ENCODE measurements at regions of chr2 and their contacts with region 1.

Region 1: DNA sequence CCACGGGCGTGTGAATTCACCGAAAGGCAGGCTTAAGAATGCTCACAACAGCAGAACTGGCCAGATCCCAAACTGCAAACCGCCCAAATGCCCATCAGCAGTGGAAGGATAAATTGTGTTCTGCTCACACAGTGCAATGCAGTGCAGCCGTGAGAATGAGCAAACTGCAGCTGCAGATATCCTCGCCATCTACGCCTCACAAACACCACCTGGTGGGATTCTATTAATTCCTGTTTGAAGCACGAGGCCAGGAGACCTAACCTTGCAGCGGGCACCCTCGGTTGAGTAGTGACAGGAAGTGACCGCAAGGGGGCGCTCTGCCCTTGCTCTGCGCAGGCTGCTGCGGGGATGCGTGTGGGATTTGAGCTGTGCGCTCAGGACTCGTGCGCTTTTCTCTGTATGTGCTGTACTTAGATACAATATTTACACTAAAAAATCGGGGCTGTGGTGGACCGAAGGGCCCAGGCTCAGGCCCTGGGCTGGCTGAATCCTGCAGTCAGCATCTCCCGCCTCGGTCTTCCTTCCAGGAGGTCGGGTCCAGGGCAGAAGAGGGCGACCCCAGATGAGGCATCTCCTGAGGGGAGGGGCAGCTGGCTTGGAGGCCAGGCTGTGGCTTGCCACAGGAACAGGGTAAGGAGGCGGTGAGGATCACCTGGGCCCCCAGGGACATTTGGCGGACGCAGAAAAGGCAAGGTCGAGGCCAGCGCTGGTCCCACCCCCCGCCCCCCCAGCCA is 19.8 kb upstream of the PDIA6 start:
- DNase-seq: peak; percentile 64
- H3K4me3 ChIP-seq: no peak overlapping the region
- H3K27ac ChIP-seq: no peak overlapping the region
- H3K4me1 ChIP-seq: no peaks in the 10 kb centered on the region
- H3K27me3 ChIP-seq: peaks cover 4% of the 10 kb centered on the region
- CTCF ChIP-seq: peak; percentile 95 to 99

Region 2: DNA sequence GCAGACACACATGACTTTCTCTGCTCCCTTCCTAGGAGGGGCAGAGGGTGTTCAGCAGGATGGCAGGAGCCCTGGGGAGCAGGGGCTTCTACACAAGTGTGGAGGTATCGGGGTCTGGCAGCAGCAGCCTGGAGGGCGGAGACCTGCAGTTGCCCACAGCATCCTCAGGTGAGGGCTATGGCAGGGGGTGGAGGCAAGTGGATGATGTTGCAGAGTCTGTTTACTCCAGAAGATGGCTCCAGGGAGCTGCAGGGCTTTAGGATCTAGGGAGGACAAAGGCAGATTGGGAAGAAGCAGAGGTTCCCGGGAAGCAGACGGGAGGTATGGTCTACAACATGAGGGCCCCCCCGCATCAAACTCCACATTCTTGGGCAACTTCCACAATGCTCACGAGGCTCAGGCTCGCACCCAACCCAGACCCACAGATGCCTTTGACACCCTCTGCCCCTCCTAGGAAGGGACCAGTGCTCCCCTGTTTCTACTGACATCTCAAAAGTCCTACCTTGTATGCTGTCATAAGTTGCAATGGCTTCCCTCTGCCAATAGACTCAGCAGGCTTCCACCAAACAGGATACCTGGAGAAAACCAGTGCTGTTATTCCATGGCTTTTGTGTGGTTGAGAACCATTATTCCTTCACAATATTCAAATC is 123.0 kb before region 1 on chr2:
- CTCF ChIA-PET with region 1: interaction called, 3 read pairs
- dilution Hi-C with region 1: no loop called
- in situ Hi-C with region 1: no loop called
- intact Hi-C with region 1: loop called (anchors 1 kb)
- DNase-seq: peak; percentile 44
- H3K4me3 ChIP-seq: no peak overlapping the region
- H3K27ac ChIP-seq: no peak overlapping the region
- H3K4me1 ChIP-seq: peaks cover 6% of the 10 kb centered on the region
- H3K27me3 ChIP-seq: no peaks in the 10 kb centered on the region
- CTCF ChIP-seq: peak; percentile 64 to 83

Region 3: GRCh38 chr2:10911261-10912075 is 79.1 kb after region 1 on chr2 and contains the start of gene KCNF1:
- CTCF ChIA-PET with region 1: no interaction called
- dilution Hi-C with region 1: no loop called
- in situ Hi-C with region 1: no loop called
- intact Hi-C with region 1: loop called (anchors 5 kb)
- DNase-seq: peak; percentile 58
- H3K4me3 ChIP-seq: peak within 1 kb of the TSS; percentile 1 to 43 (median 32)
- H3K27ac ChIP-seq: no peak within 1 kb of the TSS
- H3K4me1 ChIP-seq: no peaks in the 10 kb centered on the region
- H3K27me3 ChIP-seq: peaks cover 9% of the 10 kb centered on the region
- CTCF ChIP-seq: peak; percentile 23 to 49
- total RNA-seq, gene KCNF1: 0.54 to 2.5 TPM

Region 4: GRCh38 chr2:11124503-11125068 is 292.2 kb after region 1 on chr2:
- CTCF ChIA-PET with region 1: interaction called, 8 read pairs
- dilution Hi-C with region 1: no loop called
- in situ Hi-C with region 1: loop called (anchors 5 kb)
- intact Hi-C with region 1: loop called (anchors 1 kb)
- DNase-seq: peak; percentile 45
- H3K4me3 ChIP-seq: no peak overlapping the region
- H3K27ac ChIP-seq: no peak overlapping the region
- H3K4me1 ChIP-seq: peaks cover 21% of the 10 kb centered on the region
- H3K27me3 ChIP-seq: no peaks in the 10 kb centered on the region
- CTCF ChIP-seq: peak; percentile 91 to 97

Region 5: DNA sequence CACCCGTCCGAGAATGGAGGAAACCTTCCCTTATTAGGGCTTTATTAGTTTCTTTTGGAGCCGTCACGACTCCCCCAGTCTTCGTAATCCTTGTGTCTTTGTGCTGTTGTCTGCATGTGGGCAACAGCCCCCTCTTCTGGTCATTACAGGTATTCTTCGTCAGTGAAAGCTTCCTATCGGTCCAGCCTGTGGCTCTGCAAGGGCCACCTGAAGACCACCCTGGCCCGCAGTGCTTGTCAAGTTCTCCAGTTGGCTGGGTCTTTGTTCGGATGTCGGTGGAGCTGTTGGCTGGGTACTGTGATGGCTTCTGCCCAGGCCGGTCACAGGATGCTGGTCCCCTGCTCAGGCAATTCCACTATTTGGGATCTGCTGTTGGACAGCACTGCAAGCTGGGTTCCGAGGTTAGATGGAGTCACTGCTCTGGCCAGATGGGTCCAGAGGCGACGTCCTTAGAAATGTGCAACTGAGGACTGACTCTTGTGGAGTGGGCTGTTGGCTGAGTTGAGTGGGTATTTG is 614.4 kb after region 1 on chr2:
- CTCF ChIA-PET with region 1: no interaction called
- dilution Hi-C with region 1: no loop called
- in situ Hi-C with region 1: loop called in 1 of 2 experiments (anchors 25 kb)
- intact Hi-C with region 1: loop called (anchors 1 kb)
- DNase-seq: peak; percentile 48
- H3K4me3 ChIP-seq: no peak overlapping the region
- H3K27ac ChIP-seq: no peak overlapping the region
- H3K4me1 ChIP-seq: no peaks in the 10 kb centered on the region
- H3K27me3 ChIP-seq: no peaks in the 10 kb centered on the region
- CTCF ChIP-seq: peak; percentile 71 to 88